Activated naive CD4-positive, alpha-beta T cell treated with anti-CD3 and anti-CD28 coated beads for 36 hours (primary cell): ENCODE measurements at regions of chr6 and their contacts with region 1.

Region 1: DNA sequence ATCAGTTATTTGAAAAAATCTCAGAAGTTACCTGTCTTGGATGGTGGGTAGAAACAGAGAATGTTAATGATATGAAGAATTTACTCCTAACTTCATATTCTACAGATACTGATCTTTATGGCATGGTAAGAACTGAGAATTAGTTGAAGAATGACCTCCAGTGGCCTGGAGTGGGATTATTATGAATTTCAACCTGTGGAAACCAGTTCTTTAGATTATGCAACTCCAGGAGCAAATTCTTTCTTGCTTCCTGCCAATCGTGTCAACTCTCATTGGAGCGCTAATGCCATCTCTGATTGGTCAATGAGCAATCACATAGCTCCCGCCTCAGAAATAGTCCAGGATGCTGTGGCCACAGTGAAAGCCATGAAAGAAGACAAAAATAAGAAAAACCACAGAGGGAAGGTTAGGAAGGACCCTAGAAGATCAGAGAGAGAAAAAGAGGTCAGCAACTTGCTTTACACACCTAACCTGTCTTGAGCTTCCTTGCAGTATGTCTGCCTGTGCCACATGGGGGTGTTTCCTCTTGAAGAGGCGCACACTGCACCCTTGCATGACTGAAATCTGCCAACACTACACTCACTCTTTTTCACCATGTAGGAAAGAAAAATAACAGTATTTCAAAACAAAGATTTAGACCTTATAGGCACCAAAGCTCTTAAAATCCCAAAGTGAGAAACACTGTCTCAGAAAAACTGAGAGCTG is 40.4 kb downstream of the LYRM2 start:
- DNase-seq: peak; percentile 7
- H3K4me3 Mint-ChIP-seq: no peak overlapping the region
- H3K27ac Mint-ChIP-seq: no peak overlapping the region
- H3K4me1 Mint-ChIP-seq: peaks cover 18% of the 10 kb centered on the region
- H3K27me3 Mint-ChIP-seq: no peaks in the 10 kb centered on the region

Region 2: GRCh38 chr6:89432875-89433251 is 165.3 kb before region 1 on chr6 and contains the start of gene ANKRD6:
- CTCF ChIA-PET with region 1: interaction called, 6 read pairs
- intact Hi-C with region 1: loop called (anchors 1 kb)
- DNase-seq: peak; percentile 77
- H3K4me3 Mint-ChIP-seq: peak within 1 kb of the TSS; percentile 69
- H3K27ac Mint-ChIP-seq: no peak within 1 kb of the TSS
- H3K4me1 Mint-ChIP-seq: peaks cover 10% of the 10 kb centered on the region
- H3K27me3 Mint-ChIP-seq: no peaks in the 10 kb centered on the region
- total RNA-seq, gene ANKRD6: 1.5 to 1.6 TPM